Activated T-helper 1 cell treated with anti-CD3 and anti-CD28 coated beads, Interleukin-12 subunit alpha, Interleukin-12 subunit beta, Interleukin-2, Interleukin-4 antibody, amounts not matched to agents 30 ng/mL and 10 ng/mL and 1 ng/mL, durations not matched to agents 14 hours and 24 hours and 36 hours (primary cell): ENCODE measurements at regions of chr16 and their contacts with region 1.

Region 1: DNA sequence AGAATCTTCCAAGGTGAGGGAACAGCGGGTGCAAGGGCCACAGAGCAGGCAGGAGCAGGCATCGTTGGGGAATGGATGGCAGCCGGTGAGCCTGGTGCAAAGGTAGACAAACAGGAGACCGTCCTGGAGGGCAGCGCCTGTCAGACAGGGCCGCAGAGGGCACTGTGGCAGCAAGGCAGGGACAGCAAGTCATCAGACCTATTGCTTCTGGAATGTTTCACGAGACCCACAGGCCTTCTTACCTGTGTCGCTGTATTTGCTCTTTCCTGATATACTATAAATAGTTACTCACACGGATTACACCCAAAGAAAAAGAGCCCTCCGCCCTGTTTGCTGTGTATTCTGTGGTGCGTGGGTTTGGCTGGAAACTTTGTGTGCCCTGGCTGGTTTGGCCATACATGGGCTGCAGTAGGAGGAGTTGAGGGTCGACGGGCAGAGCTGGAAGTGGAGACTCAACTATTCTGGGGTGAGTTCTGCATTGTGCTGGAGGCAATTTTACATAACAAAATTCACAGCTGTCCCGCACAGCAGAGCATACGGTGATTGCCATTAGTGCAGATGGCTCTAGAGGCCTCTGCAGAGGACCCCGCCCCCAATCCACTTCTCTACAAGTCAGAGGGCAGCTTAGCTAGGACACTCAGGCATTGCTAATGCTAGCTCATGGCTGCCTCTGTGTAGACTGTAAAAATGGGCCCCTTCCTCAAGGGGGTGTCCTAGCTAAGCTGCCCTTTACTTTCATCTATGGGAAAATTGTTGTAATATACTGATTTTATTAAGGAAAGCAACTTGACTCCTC is 18.6 kb upstream of the POLR3E start:
- DNase-seq: no peak
- H3K4me3 Mint-ChIP-seq: no peak overlapping the region
- H3K27ac Mint-ChIP-seq: no peak overlapping the region
- H3K4me1 Mint-ChIP-seq: no peaks in the 10 kb centered on the region
- H3K27me3 Mint-ChIP-seq: no peaks in the 10 kb centered on the region

Region 2: DNA sequence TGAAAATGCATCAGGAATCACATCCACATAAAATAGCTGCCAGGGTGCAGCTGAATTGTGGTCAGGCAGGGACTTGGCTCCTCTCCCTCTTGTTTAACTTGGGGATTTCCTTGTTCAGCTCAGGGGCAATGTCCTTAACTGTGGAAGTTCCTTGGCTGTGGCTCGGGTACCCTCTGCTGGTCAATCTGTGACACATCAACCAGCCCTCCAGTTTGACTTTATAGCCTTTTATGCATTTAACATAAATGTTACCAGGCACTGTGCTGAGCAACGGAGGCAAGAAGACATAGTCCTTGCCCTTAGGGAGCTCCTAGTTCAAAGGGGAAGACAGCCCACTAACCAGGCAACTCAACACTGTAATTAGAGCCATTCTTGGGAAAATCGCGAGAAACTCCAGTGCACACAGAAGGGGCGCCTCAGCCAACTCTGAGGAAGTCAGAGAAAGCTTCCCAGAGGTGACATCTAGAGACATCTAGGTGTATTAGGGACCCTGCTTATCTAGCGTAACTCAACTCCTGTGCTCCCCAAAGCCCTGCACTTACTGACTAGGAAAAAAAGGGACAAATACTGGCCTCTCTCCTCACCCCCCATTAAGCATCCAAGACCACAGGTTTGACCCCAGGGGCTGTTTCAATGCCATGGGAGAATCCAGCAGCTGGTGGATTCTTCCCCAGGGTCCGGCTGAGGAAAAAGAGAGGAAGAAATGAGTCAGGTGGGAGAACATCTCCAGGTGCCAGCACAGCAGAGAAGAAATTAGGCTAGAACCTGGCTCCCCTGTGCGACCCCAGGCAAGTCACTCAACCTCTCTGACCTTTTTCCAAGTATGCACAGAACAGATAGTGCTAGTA is 89.8 kb before region 1 on chr16:
- intact Hi-C with region 1: no loop called
- DNase-seq: peak; percentile 60
- H3K4me3 Mint-ChIP-seq: peak overlapping the region; percentile 88
- H3K27ac Mint-ChIP-seq: peak overlapping the region; percentile 99
- H3K4me1 Mint-ChIP-seq: peaks cover 47% of the 10 kb centered on the region
- H3K27me3 Mint-ChIP-seq: peaks cover 3% of the 10 kb centered on the region

Region 3: DNA sequence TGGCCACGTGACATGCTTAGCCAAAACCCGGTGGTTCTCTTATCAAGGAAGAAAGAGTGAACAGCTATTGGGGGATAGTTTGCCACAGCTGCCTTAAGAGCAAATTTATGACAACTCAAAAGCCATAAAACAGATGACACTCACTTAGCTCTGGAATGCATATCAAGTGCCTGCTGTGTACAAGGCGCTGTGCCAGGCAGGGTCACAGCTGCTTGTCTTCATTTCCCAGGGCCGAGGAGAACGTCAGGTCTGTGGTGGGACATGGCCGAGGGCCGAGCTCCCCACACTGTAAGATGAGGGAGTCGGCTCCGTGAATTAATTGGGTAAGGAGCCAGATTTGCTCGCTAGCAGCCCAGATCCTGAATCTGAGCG is 58.6 kb before region 1 on chr16:
- intact Hi-C with region 1: loop called (anchors 5 kb)
- DNase-seq: no peak
- H3K4me3 Mint-ChIP-seq: no peak overlapping the region
- H3K27ac Mint-ChIP-seq: no peak overlapping the region
- H3K4me1 Mint-ChIP-seq: peaks cover 10% of the 10 kb centered on the region
- H3K27me3 Mint-ChIP-seq: no peaks in the 10 kb centered on the region